Activated CD8-positive, alpha-beta memory T cell treated with anti-CD3 and anti-CD28 coated beads, Interleukin-2, amount 10 ng/mL, durations not matched to agents 7 days and 5 days (primary cell): ENCODE measurements at regions of chr19 and their contacts with region 1.

Region 1: DNA sequence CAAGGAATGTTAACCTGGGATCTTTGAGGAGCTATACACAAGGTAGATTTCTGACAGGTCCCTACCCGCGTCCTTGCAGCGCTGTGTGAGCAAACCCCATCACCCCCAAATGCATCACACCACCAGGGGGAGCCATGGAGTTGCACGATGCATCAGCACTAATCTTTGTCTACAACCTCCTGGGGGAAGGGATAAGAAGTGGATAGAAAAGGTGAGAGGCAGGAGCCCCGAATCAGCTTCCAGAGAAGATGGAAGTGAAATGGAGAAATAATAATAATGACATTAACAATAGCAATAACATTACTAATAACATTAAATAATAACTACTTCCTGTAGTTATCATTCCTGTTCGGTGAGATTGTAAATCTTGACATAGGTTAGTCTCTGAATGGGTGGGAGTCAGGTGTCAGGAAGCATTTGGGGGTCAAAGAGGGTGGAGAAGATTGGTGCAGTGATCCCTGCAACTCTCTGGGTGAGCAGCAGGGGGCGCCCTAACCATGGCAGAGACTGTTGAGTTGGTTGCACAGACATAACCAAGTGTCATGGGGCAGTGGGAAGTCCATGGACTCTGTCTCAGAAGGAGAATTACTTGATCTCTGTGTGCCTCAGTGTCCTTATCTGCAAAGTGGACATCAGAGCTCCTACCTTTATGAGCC is 16.5 kb downstream of the SIGLEC7 start:
- DNase-seq: peak; percentile 89
- ATAC-seq: peak; percentile 87
- H3K4me3 Mint-ChIP-seq: no peak overlapping the region
- H3K27ac Mint-ChIP-seq: peak overlapping the region; percentile 53
- H3K4me1 Mint-ChIP-seq: peaks cover 40% of the 10 kb centered on the region
- H3K27me3 Mint-ChIP-seq: peaks cover 48% of the 10 kb centered on the region

Region 2: DNA sequence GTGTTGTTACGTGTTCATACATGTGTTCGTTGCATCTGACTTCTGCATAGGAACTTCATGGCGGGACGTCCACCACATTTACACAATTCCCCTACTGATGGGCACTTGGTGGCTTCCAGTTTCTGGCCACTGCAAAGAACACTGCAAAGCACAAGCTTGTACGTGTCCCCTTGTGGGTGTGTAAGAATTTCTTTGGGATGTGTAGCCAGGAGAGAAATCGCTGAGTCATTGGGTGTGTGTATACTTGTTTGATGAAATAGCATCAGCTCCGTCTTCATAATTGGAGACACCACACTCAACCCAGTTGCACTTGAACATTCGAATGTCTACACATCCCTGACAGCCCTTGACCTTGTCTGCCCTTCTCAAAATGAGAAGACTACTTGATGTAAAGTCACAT is 225.0 kb before region 1 on chr19:
- CTCF ChIA-PET with region 1: no interaction called
- DNase-seq: no peak
- ATAC-seq: no peak
- H3K4me3 Mint-ChIP-seq: no peak overlapping the region
- H3K27ac Mint-ChIP-seq: no peak overlapping the region
- H3K4me1 Mint-ChIP-seq: peaks cover 2% of the 10 kb centered on the region
- H3K27me3 Mint-ChIP-seq: peaks cover 17% of the 10 kb centered on the region

Region 3: GRCh38 chr19:51114087-51114729 is 44.4 kb before region 1 on chr19:
- CTCF ChIA-PET with region 1: interaction called, 11 read pairs
- DNase-seq: peak; percentile 62
- ATAC-seq: peak; percentile 86
- H3K4me3 Mint-ChIP-seq: no peak overlapping the region
- H3K27ac Mint-ChIP-seq: peak overlapping the region; percentile 61
- H3K4me1 Mint-ChIP-seq: peaks cover 38% of the 10 kb centered on the region
- H3K27me3 Mint-ChIP-seq: peaks cover 47% of the 10 kb centered on the region

Region 4: GRCh38 chr19:51147663-51148062 is 10.9 kb before region 1 on chr19:
- CTCF ChIA-PET with region 1: interaction called, 21 read pairs
- DNase-seq: peak; percentile 5
- ATAC-seq: no peak
- H3K4me3 Mint-ChIP-seq: no peak overlapping the region
- H3K27ac Mint-ChIP-seq: no peak overlapping the region
- H3K4me1 Mint-ChIP-seq: no peaks in the 10 kb centered on the region
- H3K27me3 Mint-ChIP-seq: peaks cover 39% of the 10 kb centered on the region

Region 5: DNA sequence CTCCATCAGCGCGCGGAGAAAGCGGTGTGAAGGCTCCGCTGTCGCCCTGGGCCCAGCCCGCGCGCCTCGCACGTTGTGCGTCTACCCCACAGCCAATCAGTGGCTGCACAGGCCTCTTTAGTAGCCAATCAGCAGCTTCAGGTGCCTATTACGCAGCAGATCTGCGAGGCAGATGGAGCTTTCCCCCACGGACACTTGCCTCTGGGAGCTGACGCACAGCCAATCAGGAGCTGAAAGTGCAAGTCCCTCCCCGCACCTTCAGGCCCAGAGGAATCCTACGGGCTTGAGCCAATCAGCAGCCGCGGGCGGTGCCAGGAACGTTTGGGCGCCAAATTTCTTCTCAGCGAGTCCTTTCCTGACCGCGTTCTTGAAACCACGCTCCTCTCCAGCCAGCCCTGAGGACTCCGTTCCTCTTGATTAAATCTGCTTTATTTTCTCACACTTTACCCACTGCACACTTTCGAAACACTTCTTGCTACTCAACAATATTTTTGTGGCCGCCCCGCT is 23.4 kb after region 1 on chr19:
- CTCF ChIA-PET with region 1: interaction called, 15 read pairs
- DNase-seq: peak; percentile 59
- ATAC-seq: peak; percentile 35
- H3K4me3 Mint-ChIP-seq: peak overlapping the region; percentile 49
- H3K27ac Mint-ChIP-seq: peak overlapping the region; percentile 75
- H3K4me1 Mint-ChIP-seq: peaks cover 13% of the 10 kb centered on the region
- H3K27me3 Mint-ChIP-seq: peaks cover 49% of the 10 kb centered on the region

Region 6: DNA sequence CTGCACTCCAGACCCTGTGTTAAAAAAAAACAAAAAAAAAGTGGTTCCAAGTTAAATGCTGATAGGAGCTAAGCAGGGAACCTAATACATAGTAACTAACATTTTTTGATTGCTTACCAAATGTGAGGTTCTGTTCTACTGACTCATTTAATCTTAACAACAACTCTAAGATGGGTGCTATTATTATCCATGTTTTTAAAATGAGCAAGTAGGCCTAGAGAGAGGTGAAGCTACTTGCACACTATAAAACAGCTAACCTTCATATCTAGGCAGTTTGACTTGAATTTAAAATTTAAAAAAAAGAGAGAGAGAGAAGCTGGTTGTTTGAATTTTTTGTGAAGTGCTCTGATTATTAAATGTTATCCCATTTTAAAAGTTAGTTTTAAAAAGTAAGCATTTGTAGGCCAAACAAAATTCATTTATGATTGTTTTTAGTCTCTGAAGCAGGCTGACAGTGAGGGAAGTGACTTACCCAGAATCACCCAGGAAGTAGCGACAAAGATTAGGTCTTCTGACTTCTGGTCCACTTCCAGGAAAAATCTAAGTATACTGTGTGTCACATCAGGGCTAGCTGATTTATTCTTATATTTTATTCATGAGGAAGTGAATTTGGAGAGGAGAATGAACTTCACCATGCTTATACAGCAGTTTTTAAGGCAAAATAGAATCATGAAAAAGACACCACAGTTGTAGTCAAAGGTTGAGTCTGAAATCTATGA is 94.6 kb after region 1 on chr19:
- CTCF ChIA-PET with region 1: interaction called, 204 read pairs
- DNase-seq: no peak
- ATAC-seq: peak; percentile 32
- H3K4me3 Mint-ChIP-seq: no peak overlapping the region
- H3K27ac Mint-ChIP-seq: peak overlapping the region; percentile 92
- H3K4me1 Mint-ChIP-seq: peaks cover 80% of the 10 kb centered on the region
- H3K27me3 Mint-ChIP-seq: no peaks in the 10 kb centered on the region

Region 7: DNA sequence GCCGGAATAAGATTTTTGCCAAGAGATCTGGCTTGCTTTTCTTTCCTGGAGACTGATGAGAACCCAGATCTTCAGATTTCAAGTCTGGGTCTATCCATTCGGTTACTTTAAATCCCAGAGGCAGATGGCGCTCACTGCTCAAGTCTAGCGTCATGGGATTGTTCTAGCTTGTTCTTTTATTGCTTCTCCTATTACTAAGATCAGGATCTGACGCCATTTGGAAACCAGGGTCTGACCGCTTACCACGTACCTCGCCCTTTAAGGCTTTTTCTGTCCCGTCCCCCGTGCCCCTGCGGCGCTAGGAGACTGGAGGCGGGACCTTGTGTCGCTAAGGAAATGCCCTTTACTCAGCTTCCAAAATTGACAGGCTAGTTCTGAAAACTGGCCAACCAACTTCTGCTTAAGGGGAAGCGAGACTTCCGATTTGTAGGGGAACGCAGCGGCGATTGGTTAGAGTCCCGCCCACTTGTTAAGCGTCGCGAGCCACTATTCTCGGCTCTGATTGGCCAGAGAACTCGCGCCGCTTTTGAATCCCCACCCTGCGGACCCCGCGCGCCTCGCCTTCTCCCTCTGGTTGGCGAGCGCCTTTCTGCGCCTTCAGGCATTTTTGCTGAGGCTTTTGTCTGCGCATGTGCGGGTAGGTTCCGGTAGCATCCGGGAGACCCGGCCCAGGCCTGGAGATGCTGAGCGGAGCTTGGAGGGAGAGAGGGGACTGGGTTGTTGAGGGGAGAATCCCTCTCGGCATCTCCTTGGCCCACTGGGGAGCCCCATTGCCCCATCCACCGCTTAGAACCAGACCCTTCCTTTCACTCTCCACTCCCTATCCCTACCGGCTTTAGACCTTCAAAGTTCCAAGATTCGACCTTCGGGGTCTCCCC is 235.6 kb after region 1 on chr19:
- CTCF ChIA-PET with region 1: interaction called, 10 read pairs
- DNase-seq: peak; percentile 99
- ATAC-seq: peak; percentile 86
- H3K4me3 Mint-ChIP-seq: peak overlapping the region; percentile 94
- H3K27ac Mint-ChIP-seq: peak overlapping the region; percentile 100
- H3K4me1 Mint-ChIP-seq: peaks cover 47% of the 10 kb centered on the region
- H3K27me3 Mint-ChIP-seq: no peaks in the 10 kb centered on the region